PC-3 (cell line): ENCODE measurements at regions of chr6 and their contacts with region 1.

Region 1: GRCh38 chr6:123380257-123380656 is 256.5 kb downstream of the TRDN start:
- DNase-seq: peak; percentile 26
- ATAC-seq: peak; percentile 57; the same call in 1 of the 2 replicates
- H3K4me3 ChIP-seq: no peak overlapping the region
- H3K27ac ChIP-seq: no peak overlapping the region
- H3K4me1 ChIP-seq: no peaks in the 10 kb centered on the region
- H3K27me3 ChIP-seq: 0 out of 2 replicates have a peak, but pooled peaks cover 3% of the 10 kb centered on the region
- CTCF ChIP-seq: peak; percentile 39; the same call in 1 of the 2 replicates

Region 2: DNA sequence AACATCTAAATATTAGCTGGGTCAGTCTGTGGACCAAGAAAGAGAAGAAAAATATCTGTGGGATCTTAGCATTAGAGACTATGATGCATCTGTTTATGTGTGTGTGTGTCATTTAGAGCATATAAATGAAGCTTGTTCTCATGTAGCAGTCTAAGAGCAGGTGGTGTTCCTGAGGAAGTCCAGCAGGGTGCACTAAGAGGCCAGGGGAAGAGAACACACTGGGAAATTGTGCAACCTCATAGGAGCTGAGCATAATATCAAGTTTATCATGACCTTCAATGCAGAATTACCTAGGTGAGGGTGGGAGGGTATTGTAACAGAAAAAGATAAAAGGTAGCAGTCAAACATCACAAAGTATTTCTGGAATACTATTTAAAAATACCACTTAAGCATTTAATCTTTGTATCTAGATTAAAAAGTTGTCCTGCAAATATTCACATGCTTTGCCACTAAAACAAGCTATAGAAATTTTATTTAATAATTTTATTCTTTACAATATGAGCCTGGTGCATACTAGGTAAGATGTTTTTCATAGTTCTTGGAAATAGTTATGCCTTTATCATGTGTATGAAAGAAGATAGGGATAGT is 510.7 kb before region 1 on chr6:
- CTCF ChIA-PET with region 1: interaction called, 5 read pairs
- POLR2A ChIA-PET with region 1: no interaction called
- intact Hi-C with region 1: loop called (anchors 5 kb)
- DNase-seq: peak; percentile 57
- ATAC-seq: peak; percentile 95
- H3K4me3 ChIP-seq: no peak overlapping the region
- H3K27ac ChIP-seq: no peak overlapping the region
- H3K4me1 ChIP-seq: peaks cover 9% of the 10 kb centered on the region
- H3K27me3 ChIP-seq: peaks cover 7% of the 10 kb centered on the region; the same call in 1 of the 2 replicates
- CTCF ChIP-seq: peak; percentile 75